T-cell (primary cell): ENCODE measurements at regions of chrX and their contacts with region 1.

Region 1: DNA sequence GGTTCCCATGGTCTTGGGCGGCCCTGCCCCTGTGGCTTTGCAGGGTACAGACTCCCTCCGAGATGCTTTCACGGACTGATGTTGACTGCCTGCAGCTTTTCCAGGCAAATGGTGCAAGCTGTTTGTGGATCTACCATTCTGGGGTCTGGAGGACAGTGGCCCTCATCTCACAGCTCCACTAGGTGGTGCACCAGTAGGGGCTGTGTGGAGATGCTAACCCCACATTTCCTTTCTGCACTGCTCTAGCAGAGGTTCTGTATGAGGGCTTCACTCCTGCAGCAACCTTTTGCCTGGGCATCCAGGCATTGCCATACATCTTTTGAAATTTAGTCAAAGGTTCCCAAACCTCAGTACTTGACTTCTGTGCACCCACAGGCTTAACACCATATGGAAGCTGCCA is 176.1 kb downstream of the DCAF12L1 start:
- DNase-seq: no peak
- ATAC-seq: no peak
- H3K4me3 ChIP-seq: no peak overlapping the region
- H3K4me3 Mint-ChIP-seq: no peak overlapping the region
- H3K27ac ChIP-seq: no peak overlapping the region
- H3K27ac Mint-ChIP-seq: no peak overlapping the region
- H3K4me1 ChIP-seq: no peaks in the 10 kb centered on the region
- H3K4me1 Mint-ChIP-seq: no peaks in the 10 kb centered on the region
- H3K27me3 ChIP-seq: no peaks in the 10 kb centered on the region
- H3K27me3 Mint-ChIP-seq: no peaks in the 10 kb centered on the region

Region 2: DNA sequence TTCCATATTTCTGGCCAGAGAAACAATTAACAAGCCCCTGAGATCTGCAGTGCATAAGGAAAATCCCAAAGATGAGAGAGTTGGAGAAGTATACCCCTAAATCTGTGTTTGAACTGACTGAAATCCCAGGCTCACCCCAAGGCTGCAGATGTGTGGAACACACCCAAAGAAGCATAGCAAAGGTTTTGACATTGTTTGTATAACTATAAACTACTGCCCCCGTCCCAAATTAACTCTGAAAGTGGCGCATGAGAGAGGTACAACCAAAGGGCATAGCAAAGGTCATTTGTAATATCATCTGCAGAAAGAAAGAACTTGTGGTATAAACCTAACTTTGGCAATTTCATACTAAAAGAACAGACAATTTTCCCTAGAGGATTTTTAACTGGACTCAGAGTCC is 18.2 kb after region 1 on chrX:
- CTCF ChIA-PET with region 1: no interaction called
- POLR2A ChIA-PET with region 1: interaction called in 1 of 2 experiments, 10 read pairs
- DNase-seq: no peak
- ATAC-seq: no peak
- H3K4me3 ChIP-seq: no peak overlapping the region
- H3K4me3 Mint-ChIP-seq: no peak overlapping the region
- H3K27ac ChIP-seq: no peak overlapping the region
- H3K27ac Mint-ChIP-seq: no peak overlapping the region
- H3K4me1 ChIP-seq: no peaks in the 10 kb centered on the region
- H3K4me1 Mint-ChIP-seq: no peaks in the 10 kb centered on the region
- H3K27me3 ChIP-seq: no peaks in the 10 kb centered on the region
- H3K27me3 Mint-ChIP-seq: no peaks in the 10 kb centered on the region